ENCODE measurements at regions of chr10 and their contacts with region 1.

Region 1: GRCh38 chr10:22436884-22437619 is 91.8 kb downstream of the SPAG6 start:
- DNase-seq: peak; percentile 91
- H3K4me3 ChIP-seq: peak overlapping the region; percentile 66 to 74 (median 69)
- H3K27ac ChIP-seq: peak overlapping the region; percentile 94
- H3K4me1 ChIP-seq: peaks cover 27% of the 10 kb centered on the region
- H3K27me3 ChIP-seq: peaks cover 2 to 14% of the 10 kb centered on the region in 2 experiments
- CTCF ChIP-seq: peak; percentile 7 to 36
- POLR2A ChIP-seq: peak; percentile 93

Region 2: GRCh38 chr10:22003079-22003913 is 433.8 kb before region 1 on chr10 and contains the start of gene DNAJC1:
- CTCF ChIA-PET with region 1: no interaction called
- POLR2A ChIA-PET with region 1: interaction called, 3 read pairs
- dilution Hi-C with region 1: no loop called
- intact Hi-C with region 1: loop called (anchors 2 kb)
- DNase-seq: peak; percentile 95
- H3K4me3 ChIP-seq: peak within 1 kb of the TSS; percentile 47 to 93 (median 86)
- H3K27ac ChIP-seq: peak within 1 kb of the TSS; percentile 86
- H3K4me1 ChIP-seq: peaks cover 10% of the 10 kb centered on the region
- H3K27me3 ChIP-seq: peaks cover 3 to 27% of the 10 kb centered on the region in 2 experiments
- CTCF ChIP-seq: no peak
- POLR2A ChIP-seq: peak; percentile 80
- total RNA-seq, gene DNAJC1: 19.7 and 22.5 TPM in 2 replicates

Region 3: GRCh38 chr10:22251751-22252223 is 185.3 kb before region 1 on chr10:
- CTCF ChIA-PET with region 1: no interaction called
- POLR2A ChIA-PET with region 1: no interaction called
- dilution Hi-C with region 1: no loop called
- intact Hi-C with region 1: loop called (anchors 5 kb)
- DNase-seq: peak; percentile 67
- H3K4me3 ChIP-seq: peak overlapping the region; percentile 58 to 87 (median 58)
- H3K27ac ChIP-seq: peak overlapping the region; percentile 81
- H3K4me1 ChIP-seq: peaks cover 6% of the 10 kb centered on the region
- H3K27me3 ChIP-seq: peaks cover under 1 to 1% of the 10 kb centered on the region in 2 experiments
- CTCF ChIP-seq: no peak
- POLR2A ChIP-seq: no peak

Region 4: DNA sequence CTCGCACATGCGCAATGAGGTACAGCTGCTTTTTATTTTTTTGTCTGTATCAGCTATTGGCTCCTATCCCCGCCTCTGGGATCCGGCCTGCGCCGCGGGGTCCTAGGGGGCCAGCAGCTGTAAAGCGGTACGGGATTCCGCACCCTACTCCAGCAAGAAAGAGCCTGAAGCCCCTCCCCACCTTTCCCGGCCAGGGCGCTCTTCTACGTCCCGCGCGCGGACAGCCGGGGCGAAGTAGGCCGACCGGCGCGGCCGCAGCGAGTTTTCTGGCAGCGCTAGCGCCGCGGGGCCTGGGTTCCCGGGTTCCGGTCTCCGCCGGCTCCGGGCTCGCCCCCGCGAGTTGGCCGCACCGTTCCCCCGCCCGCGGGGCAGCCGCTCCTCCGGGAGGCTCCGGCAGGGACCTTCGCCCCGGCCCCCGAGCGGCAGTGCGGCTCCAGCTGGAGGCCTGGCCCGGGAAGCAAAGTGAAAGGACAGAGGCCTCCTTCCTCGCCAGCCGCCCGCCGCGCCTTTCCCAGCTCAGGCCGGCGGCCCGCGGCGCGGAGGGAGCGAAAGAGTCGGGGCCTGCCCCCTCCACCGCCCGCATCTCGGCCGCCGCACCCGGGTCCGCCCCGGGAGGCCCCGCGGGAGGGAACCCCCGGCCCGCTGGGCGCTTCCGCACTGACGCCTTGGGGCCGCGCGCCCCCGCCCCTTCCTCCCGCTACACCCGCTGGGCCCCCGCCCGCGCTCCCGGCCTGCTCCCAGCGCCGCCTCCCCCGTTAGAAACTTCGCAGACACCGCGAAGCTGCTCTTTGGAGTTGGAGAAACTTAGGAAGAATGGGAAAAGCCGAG is 96.5 kb before region 1 on chr10:
- CTCF ChIA-PET with region 1: interaction called, 4 read pairs
- POLR2A ChIA-PET with region 1: interaction called, 8 read pairs
- dilution Hi-C with region 1: no loop called
- intact Hi-C with region 1: loop called (anchors 1 kb)
- DNase-seq: peak; percentile 53
- H3K4me3 ChIP-seq: peak overlapping the region; percentile 78 to 81 (median 80)
- H3K27ac ChIP-seq: peak overlapping the region; percentile 63
- H3K4me1 ChIP-seq: peaks cover 13% of the 10 kb centered on the region
- H3K27me3 ChIP-seq: peaks cover 72 to 90% of the 10 kb centered on the region in 2 experiments
- CTCF ChIP-seq: no peak
- POLR2A ChIP-seq: peak; percentile 31

Region 5: GRCh38 chr10:22620140-22620857 is 183.2 kb after region 1 on chr10:
- CTCF ChIA-PET with region 1: no interaction called
- POLR2A ChIA-PET with region 1: no interaction called
- dilution Hi-C with region 1: no loop called
- intact Hi-C with region 1: loop called (anchors 10 kb)
- DNase-seq: peak; percentile 91
- H3K4me3 ChIP-seq: no peak overlapping the region
- H3K27ac ChIP-seq: peak overlapping the region; percentile 81
- H3K4me1 ChIP-seq: peaks cover 66% of the 10 kb centered on the region
- H3K27me3 ChIP-seq: no peaks in the 10 kb centered on the region
- CTCF ChIP-seq: no peak
- POLR2A ChIP-seq: no peak

Measured in endothelial cell of umbilical vein (primary cell).